CD8-positive, alpha-beta T cell (primary cell): ENCODE measurements at regions of chr1 and their contacts with region 1.

Region 1: GRCh38 chr1:8314346-8315280 is 3.3 kb upstream of the SLC45A1 start:
- DNase-seq: peak in 8 of 9 experiments; percentile 14 to 73 (median 53)
- ATAC-seq: no peak
- H3K4me3 ChIP-seq: no peak overlapping the region
- H3K4me3 Mint-ChIP-seq: no peak overlapping the region
- H3K27ac ChIP-seq: no peak overlapping the region
- H3K27ac Mint-ChIP-seq: no peak overlapping the region
- H3K4me1 ChIP-seq: peaks cover 20% of the 10 kb centered on the region
- H3K4me1 Mint-ChIP-seq: peaks cover 15% of the 10 kb centered on the region
- H3K27me3 ChIP-seq: peaks cover 3 to 11% of the 10 kb centered on the region in 2 experiments
- H3K27me3 Mint-ChIP-seq: peaks cover 23% of the 10 kb centered on the region
- CTCF ChIP-seq: peak; percentile 60

Region 2: DNA sequence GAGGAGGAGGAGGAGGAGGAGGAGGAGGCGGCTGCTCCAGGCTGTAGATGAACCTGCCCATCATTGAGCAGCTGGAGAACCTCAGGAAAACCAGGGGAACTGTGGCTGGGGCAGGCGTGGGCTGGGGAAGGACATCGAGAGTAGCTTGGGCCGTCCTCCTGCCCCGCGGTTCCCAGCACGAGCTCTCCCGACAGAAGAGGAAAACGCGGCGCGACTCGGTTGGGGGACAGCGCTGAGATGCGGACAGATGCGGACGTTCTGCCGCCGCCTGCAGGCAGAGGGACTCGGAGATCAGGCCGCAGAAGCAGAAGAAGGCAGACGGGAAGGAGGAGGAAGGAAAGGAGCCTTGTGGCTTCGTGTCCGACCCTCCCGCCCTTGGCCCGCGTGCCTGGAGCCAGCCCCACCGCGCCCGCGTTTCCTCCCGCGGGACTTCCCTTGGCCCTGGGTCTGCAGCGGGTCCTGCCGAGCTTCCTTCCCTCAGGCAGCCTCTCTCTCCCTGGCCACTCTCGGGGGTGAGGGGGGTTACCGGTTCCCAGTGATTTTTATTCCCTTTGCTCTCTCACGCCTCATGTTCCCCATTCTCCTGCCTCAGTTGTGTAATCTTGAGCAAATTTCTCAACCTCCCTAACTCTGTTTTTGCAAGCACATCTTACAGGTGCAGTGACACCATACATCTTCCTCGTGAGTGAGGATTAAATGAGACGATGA is 372.2 kb before region 1 on chr1:
- CTCF ChIA-PET with region 1: no interaction called
- POLR2A ChIA-PET with region 1: no interaction called
- intact Hi-C with region 1: no loop called
- DNase-seq: peak in 7 of 9 experiments; percentile 26 to 77 (median 49)
- ATAC-seq: peak; percentile 59
- H3K4me3 ChIP-seq: peak overlapping the region; percentile 45 to 48
- H3K4me3 Mint-ChIP-seq: peak overlapping the region; percentile 81
- H3K27ac ChIP-seq: peak overlapping the region in 1 of 2 experiments; percentile 60
- H3K27ac Mint-ChIP-seq: peak overlapping the region; percentile 50
- H3K4me1 ChIP-seq: peaks cover 21% of the 10 kb centered on the region
- H3K4me1 Mint-ChIP-seq: peaks cover 39% of the 10 kb centered on the region
- H3K27me3 ChIP-seq: peaks cover 3 to 6% of the 10 kb centered on the region in 2 experiments
- H3K27me3 Mint-ChIP-seq: peaks cover 15% of the 10 kb centered on the region
- CTCF ChIP-seq: no peak

Region 3: DNA sequence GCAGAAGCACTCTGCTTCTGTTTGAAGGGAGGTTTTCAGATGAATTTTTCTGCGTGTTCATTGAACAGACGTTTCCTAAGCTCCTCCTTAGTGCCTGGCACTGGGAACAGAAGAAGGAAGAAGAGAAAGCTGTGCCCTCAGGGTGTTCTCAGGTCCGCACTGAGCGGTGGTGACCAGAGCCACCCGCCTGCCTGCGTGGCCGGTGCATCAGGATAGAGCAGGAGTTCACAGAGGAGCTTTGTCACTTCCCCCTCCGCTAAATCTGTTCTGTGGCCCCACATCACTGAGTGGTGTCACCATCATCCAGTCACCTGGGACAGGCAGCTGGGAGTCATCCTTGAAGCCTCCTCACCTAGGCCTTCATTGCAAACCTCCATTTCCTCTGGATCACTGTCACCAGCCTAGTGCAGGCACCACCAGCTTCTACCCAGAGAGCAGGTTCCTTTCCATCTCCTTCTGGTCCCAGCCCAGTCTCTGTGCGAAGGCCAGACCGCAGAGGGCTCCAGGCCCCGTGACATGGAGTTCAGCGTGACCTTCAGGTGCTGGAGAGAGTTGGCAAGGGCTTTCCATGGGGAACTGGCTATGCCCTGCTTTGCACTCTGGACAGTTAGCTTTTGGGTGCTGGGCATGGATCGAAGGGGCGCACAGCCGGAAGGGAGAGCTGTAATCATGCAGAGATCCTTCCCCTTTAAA is 331.4 kb before region 1 on chr1:
- CTCF ChIA-PET with region 1: interaction called, 9 read pairs
- POLR2A ChIA-PET with region 1: no interaction called
- intact Hi-C with region 1: loop called in 1 of 2 experiments (anchors 1 kb)
- DNase-seq: no peak
- ATAC-seq: no peak
- H3K4me3 ChIP-seq: no peak overlapping the region
- H3K4me3 Mint-ChIP-seq: no peak overlapping the region
- H3K27ac ChIP-seq: no peak overlapping the region
- H3K27ac Mint-ChIP-seq: no peak overlapping the region
- H3K4me1 ChIP-seq: peaks cover 4% of the 10 kb centered on the region
- H3K4me1 Mint-ChIP-seq: peaks cover 12% of the 10 kb centered on the region
- H3K27me3 ChIP-seq: no peaks in the 10 kb centered on the region
- H3K27me3 Mint-ChIP-seq: no peaks in the 10 kb centered on the region
- CTCF ChIP-seq: no peak

Region 4: GRCh38 chr1:8252266-8252951 is 62.2 kb before region 1 on chr1:
- CTCF ChIA-PET with region 1: no interaction called
- POLR2A ChIA-PET with region 1: no interaction called
- intact Hi-C with region 1: no loop called
- DNase-seq: no peak
- ATAC-seq: no peak
- H3K4me3 ChIP-seq: no peak overlapping the region
- H3K4me3 Mint-ChIP-seq: no peak overlapping the region
- H3K27ac ChIP-seq: no peak overlapping the region
- H3K27ac Mint-ChIP-seq: no peak overlapping the region
- H3K4me1 ChIP-seq: peaks cover 3% of the 10 kb centered on the region
- H3K4me1 Mint-ChIP-seq: peaks cover 8% of the 10 kb centered on the region
- H3K27me3 ChIP-seq: no peaks in the 10 kb centered on the region
- H3K27me3 Mint-ChIP-seq: peaks cover 4% of the 10 kb centered on the region
- CTCF ChIP-seq: no peak

Region 5: GRCh38 chr1:8370046-8370881 is 55.7 kb after region 1 on chr1:
- CTCF ChIA-PET with region 1: no interaction called
- POLR2A ChIA-PET with region 1: no interaction called
- intact Hi-C with region 1: no loop called
- DNase-seq: no peak
- ATAC-seq: no peak
- H3K4me3 ChIP-seq: no peak overlapping the region
- H3K4me3 Mint-ChIP-seq: no peak overlapping the region
- H3K27ac ChIP-seq: no peak overlapping the region
- H3K27ac Mint-ChIP-seq: peak overlapping the region; percentile 18
- H3K4me1 ChIP-seq: peaks cover 7% of the 10 kb centered on the region
- H3K4me1 Mint-ChIP-seq: peaks cover 45% of the 10 kb centered on the region
- H3K27me3 ChIP-seq: no peaks in the 10 kb centered on the region
- H3K27me3 Mint-ChIP-seq: no peaks in the 10 kb centered on the region
- CTCF ChIP-seq: no peak